PC-3 (cell line): ENCODE measurements at regions of chr1 and their contacts with region 1.

Region 1: GRCh38 chr1:59146651-59147358 is 150.1 kb upstream of the FGGY start:
- DNase-seq: peak; percentile 46
- ATAC-seq: peak; percentile 11
- H3K4me3 ChIP-seq: peak overlapping the region; percentile 68
- H3K27ac ChIP-seq: peak overlapping the region; percentile 31
- H3K4me1 ChIP-seq: peaks cover 61% of the 10 kb centered on the region
- H3K27me3 ChIP-seq: no peaks in the 10 kb centered on the region
- CTCF ChIP-seq: no peak

Region 2: DNA sequence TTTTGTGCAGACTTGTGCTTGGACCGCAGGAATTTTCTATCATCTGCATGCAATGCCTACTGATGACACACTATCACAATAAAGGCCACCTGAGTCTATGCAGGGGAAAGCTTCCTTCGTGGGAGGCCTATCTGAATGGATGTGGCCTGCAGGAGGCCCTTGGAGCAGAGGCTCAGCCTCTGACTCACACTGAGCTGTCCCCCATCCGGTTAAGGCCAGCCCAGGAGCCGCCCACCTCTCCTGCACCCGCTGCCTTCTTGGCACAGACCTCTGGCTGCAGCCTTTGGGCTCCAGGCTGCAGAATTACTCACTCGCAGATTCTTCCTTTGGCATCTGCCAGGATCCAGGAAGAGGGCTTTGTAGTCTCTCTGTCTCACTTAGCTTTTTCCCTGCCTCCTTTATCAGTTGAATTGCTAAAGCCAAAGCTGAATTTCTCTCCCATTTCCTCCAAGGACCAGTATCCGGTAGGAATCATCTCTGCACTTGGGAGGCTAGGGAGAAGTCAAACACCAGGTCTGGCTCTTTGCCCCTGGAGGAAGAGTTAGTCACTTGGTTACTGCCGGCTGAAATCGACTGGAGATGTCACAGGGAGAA is 297.9 kb before region 1 on chr1:
- CTCF ChIA-PET with region 1: no interaction called
- POLR2A ChIA-PET with region 1: no interaction called
- intact Hi-C with region 1: loop called (anchors 10 kb)
- DNase-seq: peak; percentile 99
- ATAC-seq: peak; percentile 94
- H3K4me3 ChIP-seq: peak overlapping the region; percentile 34; the same call in 1 of the 2 replicates
- H3K27ac ChIP-seq: peak overlapping the region; percentile 94
- H3K4me1 ChIP-seq: peaks cover 44% of the 10 kb centered on the region
- H3K27me3 ChIP-seq: no peaks in the 10 kb centered on the region
- CTCF ChIP-seq: no peak

Region 3: GRCh38 chr1:58903514-58904298 is 243.1 kb before region 1 on chr1:
- CTCF ChIA-PET with region 1: no interaction called
- POLR2A ChIA-PET with region 1: no interaction called
- intact Hi-C with region 1: loop called (anchors 5 kb)
- DNase-seq: peak; percentile 87
- ATAC-seq: peak; percentile 86
- H3K4me3 ChIP-seq: peak overlapping the region; percentile 78
- H3K27ac ChIP-seq: peak overlapping the region; percentile 92
- H3K4me1 ChIP-seq: peaks cover 30% of the 10 kb centered on the region
- H3K27me3 ChIP-seq: no peaks in the 10 kb centered on the region
- CTCF ChIP-seq: no peak

Region 4: GRCh38 chr1:58932859-58933598 is 213.8 kb before region 1 on chr1:
- CTCF ChIA-PET with region 1: interaction called, 3 read pairs
- POLR2A ChIA-PET with region 1: no interaction called
- intact Hi-C with region 1: loop called (anchors 5 kb)
- DNase-seq: peak; percentile 97
- ATAC-seq: peak; percentile 93
- H3K4me3 ChIP-seq: peak overlapping the region; percentile 7; the same call in 1 of the 2 replicates
- H3K27ac ChIP-seq: peak overlapping the region; percentile 82
- H3K4me1 ChIP-seq: peaks cover 50% of the 10 kb centered on the region
- H3K27me3 ChIP-seq: no peaks in the 10 kb centered on the region
- CTCF ChIP-seq: no peak

Region 5: DNA sequence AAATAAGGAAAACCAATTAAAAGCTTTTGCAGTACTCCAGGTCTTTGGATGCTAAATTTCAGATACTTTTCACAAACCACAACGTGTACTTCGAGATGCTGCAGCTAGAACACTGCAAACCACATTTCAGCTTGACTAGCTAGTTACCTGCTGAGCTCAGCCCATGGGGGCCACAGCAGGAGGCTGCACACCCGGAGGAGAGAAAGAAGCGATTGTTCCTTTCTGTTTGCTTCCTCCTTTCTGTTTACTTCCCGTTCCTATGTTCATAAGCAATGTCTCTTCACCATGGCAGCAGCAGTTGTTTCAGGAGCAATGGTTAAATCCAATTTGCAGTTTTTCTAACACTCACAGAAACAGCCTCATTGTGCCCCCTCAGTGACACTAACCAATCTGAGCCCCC is 75.5 kb before region 1 on chr1:
- CTCF ChIA-PET with region 1: no interaction called
- POLR2A ChIA-PET with region 1: interaction called, 3 read pairs
- intact Hi-C with region 1: loop called (anchors 5 kb)
- DNase-seq: no peak
- ATAC-seq: peak; percentile 42; the same call in 1 of the 2 replicates
- H3K4me3 ChIP-seq: no peak overlapping the region
- H3K27ac ChIP-seq: no peak overlapping the region
- H3K4me1 ChIP-seq: no peaks in the 10 kb centered on the region
- H3K27me3 ChIP-seq: no peaks in the 10 kb centered on the region
- CTCF ChIP-seq: no peak

Region 6: GRCh38 chr1:59446257-59446901 is 299.6 kb after region 1 on chr1:
- CTCF ChIA-PET with region 1: no interaction called
- POLR2A ChIA-PET with region 1: no interaction called
- intact Hi-C with region 1: loop called (anchors 10 kb)
- DNase-seq: peak; percentile 79
- ATAC-seq: peak; percentile 57
- H3K4me3 ChIP-seq: no peak overlapping the region
- H3K27ac ChIP-seq: peak overlapping the region; percentile 48
- H3K4me1 ChIP-seq: peaks cover 56% of the 10 kb centered on the region
- H3K27me3 ChIP-seq: no peaks in the 10 kb centered on the region
- CTCF ChIP-seq: no peak